Aorta (tissue), 5 donors: ENCODE measurements at regions of chr10 and their contacts with region 1.

Region 1: GRCh38 chr10:79068562-79069324 is at the start of gene ZMIZ1:
- DNase-seq: peak; percentile 94
- ATAC-seq: peak; percentile 73
- H3K4me3 ChIP-seq: peak within 1 kb of the TSS; percentile 88 to 97
- H3K27ac ChIP-seq: peak within 1 kb of the TSS; percentile 73 to 94
- H3K4me1 ChIP-seq: peaks cover 0 to 2% of the 10 kb centered on the region in 2 donors
- H3K27me3 ChIP-seq: no peaks in the 10 kb centered on the region
- total RNA-seq, gene ZMIZ1: 48.5 to 84.1 TPM

Region 2: DNA sequence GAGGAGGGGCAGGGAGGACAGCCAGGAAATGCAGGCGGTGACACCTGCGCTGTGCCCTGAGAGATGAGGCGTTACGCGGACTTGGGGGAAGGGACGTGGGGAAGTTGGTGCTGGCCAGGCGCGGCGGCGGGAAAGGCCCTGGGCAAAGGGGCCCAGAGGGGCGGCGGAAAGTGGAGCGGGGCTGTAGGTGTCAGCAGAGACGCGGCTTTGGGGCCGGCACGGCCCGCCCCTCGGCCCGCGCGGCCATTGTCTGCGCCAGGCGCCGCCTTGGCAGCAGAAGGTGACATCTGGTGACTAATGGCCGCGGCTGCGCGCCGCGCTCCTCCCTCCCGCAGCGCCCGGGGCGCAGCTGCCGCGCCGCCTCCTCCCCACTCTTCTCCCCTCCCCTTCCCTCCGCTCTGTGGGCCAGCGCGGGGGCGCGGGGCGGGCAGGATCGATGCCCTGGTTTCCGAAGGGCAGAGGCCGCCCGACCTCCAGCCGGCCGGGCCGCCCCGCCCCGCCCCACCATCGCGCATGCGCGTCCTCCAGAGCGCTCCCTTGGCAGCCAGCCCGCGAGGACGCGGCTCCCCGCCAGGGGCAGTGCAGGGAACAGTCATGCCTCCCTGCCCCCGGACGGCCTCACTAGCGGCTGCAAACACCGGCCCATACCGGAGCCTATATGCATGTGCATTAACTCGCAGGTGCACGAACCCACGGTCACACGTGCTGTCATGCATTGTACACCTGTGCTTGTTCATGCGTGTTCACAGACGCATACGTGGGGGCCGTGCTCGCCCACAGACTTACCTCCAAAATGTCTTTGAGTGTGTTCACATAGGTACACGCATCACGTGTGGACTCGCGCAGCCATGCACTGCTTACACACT is 765.5 kb before region 1 on chr10:
- intact Hi-C with region 1: loop called in 1 of 2 experiments (anchors 2 kb)
- DNase-seq: peak; percentile 97 to 99
- ATAC-seq: peak; percentile 97
- H3K4me3 ChIP-seq: peak overlapping the region; percentile 4 to 45
- H3K27ac ChIP-seq: peak overlapping the region in 1 of 2 donors; percentile 62
- H3K4me1 ChIP-seq: no peaks in the 10 kb centered on the region
- H3K27me3 ChIP-seq: no peaks in the 10 kb centered on the region

Region 3: DNA sequence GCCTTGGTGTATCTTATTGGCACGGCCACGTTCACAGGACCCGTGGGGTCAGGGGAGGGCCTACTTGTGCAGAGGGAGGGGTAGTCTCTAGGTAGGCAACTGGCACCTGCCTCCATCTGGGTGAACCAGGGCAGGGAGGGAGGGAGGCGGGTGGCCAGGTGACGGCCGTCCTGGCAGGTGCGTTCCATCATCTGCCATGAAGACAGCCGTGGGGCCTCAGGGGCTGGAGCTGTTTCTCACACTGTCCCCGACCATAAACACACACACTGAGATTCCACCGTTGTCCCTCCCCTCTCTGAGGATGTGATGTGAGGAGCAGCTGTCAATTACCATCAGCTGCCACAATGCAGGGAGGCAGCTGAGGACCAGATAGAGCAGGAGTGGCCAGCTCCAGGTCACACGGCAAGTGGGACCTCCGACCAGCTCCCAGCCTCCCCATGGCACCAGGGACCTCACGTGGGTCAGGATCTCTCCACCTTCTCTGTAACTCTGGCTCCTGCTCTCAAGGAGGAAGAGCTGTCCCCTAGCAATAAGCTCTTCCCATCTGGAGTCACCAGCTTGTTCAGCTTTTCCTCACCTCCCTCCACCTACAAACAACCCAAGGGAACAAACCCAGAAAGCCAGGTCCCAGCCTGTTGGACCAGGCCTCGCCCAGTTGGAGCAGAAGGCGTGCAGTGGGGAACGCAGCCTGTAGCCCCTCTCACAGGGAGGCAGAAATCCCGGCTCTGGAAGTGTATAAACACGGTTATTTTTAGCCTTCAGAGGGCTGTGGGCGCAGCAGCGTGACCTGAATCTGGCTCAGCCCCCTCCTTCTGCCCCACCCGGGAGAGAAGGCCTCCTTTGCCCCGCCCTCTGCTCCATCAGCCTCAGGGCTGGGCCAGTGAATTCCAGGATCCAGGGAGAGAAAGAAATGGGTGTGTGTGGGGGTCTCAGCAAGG is 33.1 kb after region 1 on chr10:
- intact Hi-C with region 1: loop called in 1 of 2 experiments (anchors 2 kb)
- DNase-seq: peak; percentile 84 to 89
- ATAC-seq: peak; percentile 75
- H3K4me3 ChIP-seq: no peak overlapping the region
- H3K27ac ChIP-seq: peak overlapping the region; percentile 6 to 72
- H3K4me1 ChIP-seq: no peaks in the 10 kb centered on the region
- H3K27me3 ChIP-seq: no peaks in the 10 kb centered on the region

Region 4: DNA sequence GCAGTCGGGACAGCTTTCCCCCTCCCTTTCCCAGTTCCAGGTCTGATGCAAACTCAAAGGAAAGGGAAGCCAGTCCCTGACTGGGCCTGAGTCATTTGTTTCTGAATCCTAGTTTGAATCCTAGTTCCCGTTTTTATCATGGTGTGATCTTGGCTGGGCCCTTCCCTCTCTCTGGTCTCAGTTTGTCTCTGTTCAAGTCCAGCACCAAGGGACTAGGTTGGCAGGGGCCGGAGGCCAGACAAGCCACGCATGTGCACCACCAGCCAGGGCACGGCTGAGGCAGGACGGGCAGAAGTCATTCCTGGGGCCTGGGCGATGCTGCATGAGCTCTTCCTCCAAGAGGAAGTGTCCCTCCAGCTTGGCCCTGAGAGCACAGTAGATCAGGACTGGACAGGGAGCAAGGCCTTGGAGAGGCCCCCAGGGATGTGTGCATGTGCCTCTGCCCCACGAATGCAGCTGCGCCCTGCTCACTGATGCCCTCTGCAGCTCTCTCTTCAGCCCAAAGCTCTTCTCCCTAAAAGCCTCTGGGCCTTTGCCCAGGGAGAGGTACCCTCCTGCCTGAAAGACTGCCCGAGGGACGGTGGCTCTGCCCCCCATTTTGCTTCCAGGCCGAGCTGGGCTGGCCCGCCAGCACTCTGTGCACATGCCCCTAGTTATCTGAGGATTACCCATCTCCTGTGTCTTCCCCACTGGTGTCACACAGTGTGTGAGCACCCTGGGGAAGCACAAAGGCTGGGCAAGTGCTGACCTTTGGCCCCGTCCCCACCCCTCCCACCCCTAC is 86.7 kb after region 1 on chr10:
- intact Hi-C with region 1: loop called (anchors 2 to 5 kb)
- DNase-seq: peak in 1 of 2 donors; percentile 85
- ATAC-seq: no peak
- H3K4me3 ChIP-seq: no peak overlapping the region
- H3K27ac ChIP-seq: peak overlapping the region in 1 of 2 donors; percentile 61
- H3K4me1 ChIP-seq: peaks cover 0 to 11% of the 10 kb centered on the region in 2 donors
- H3K27me3 ChIP-seq: no peaks in the 10 kb centered on the region

Region 5: GRCh38 chr10:79195091-79195923 is 126.6 kb after region 1 on chr10:
- intact Hi-C with region 1: loop called (anchors 1 to 5 kb)
- DNase-seq: peak; percentile 89 to 95
- ATAC-seq: peak; percentile 92
- H3K4me3 ChIP-seq: no peak overlapping the region
- H3K27ac ChIP-seq: peak overlapping the region in 1 of 2 donors; percentile 23
- H3K4me1 ChIP-seq: no peaks in the 10 kb centered on the region
- H3K27me3 ChIP-seq: no peaks in the 10 kb centered on the region